ENCODE measurements at regions of chr19 and their contacts with region 1.

Region 1: GRCh38 chr19:56660381-56661107 is 11.0 kb downstream of the ZNF835 start:
- DNase-seq: peak in 39 of 42 donors; percentile 13 to 79 (median 56)

Region 2: GRCh38 chr19:56476093-56476492 is 184.5 kb before region 1 on chr19:
- intact Hi-C with region 1: no loop called
- DNase-seq: peak in 7 of 42 donors; percentile 4 to 32 (median 12)

Region 3: DNA sequence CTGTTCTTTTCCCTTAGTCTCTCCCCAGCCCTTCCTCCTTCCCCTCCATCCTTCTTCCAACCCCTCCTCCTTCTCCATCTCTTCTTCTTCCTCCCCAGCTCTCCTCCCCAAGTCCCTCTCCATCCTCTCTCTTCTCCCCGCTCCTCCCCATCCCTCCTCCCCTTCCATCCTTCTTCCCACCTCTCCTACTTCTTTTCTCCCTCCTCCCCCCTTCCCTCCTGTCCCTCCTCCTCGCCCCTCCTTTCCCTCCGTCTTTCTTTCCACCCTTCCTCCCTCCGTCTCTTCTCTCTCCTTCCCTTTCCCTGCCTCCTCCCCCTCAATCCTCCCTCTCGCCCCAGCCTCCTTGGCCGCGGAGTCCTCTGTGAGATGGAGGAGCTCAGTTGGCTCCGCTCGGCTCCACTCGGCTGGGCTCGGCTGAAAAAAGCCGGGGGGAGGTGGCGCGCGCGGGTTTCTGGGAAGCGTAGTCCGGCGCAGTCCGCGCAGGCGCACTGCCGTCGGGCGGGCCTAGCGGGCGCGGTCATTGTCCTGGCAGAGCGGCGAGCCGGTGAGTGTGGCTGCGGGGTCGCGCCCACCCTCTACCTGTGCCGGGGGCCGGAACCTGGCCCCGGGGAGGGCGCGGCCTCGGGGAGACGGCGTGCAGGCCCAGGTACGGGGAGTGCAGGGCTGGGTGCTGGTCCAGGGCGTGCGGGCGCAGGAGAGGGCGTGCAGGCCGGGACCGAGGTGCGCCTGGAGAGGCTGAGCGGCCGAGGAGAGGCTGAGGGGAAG is 65.6 kb before region 1 on chr19 and contains the start of gene ZNF71:
- intact Hi-C with region 1: loop called (anchors 10 kb)
- DNase-seq: peak; percentile 71 to 96 (median 90)

Measured in head of caudate nucleus (tissue), 42 donors.